ENCODE measurements at regions of chr6 and their contacts with region 1.

Region 1: DNA sequence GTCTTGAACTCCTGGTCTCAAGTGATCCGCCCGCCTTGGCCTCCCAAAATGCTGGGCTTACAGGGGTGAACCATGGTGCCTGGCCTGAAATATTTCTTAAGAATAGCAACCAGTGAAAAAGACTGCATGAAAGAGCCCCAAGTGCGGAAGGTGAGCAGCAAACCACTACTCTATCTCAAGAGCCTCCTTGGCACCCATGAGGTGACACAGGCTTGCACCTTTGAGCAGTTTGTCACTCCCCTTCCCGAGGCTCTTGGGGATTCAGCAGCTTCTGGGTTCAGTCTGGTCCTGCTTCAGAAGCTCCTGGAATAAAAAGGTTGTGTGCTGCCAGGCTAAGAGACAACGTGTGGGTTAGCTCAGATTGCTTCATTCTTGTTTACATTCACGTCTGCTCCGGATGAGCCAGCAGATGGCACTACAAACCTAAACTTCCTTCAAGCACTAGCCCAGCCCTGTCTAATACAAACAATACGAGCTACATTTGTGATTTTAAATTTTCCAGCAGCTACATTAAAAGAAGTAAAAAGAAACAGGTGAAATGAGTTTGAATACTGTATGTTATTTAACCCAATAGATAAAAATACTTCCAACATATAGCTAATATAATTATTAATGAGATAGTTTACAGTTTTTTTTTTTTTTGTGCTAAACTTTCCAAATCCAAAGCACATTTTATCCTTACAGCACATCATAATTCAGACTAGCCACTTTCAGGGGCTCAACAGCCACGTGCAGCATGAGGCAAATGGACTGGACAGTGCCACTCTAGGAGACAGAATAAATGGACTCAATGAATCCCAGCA is 46.2 kb downstream of the GJA10 start:
- DNase-seq: peak in 3 of 4 donors; percentile 55 to 88 (median 64)
- ATAC-seq: peak; percentile 95
- H3K4me3 ChIP-seq: no peak overlapping the region
- H3K27ac ChIP-seq: no peak overlapping the region
- H3K4me1 ChIP-seq: peaks cover 10% of the 10 kb centered on the region in 2 donors
- H3K27me3 ChIP-seq: no peaks in the 10 kb centered on the region
- CTCF ChIP-seq: peak; percentile 56 to 60

Region 2: GRCh38 chr6:89599727-89600126 is 340.7 kb before region 1 on chr6:
- intact Hi-C with region 1: no loop called
- DNase-seq: no peak
- ATAC-seq: no peak
- H3K4me3 ChIP-seq: no peak overlapping the region
- H3K27ac ChIP-seq: no peak overlapping the region
- H3K4me1 ChIP-seq: no peaks in the 10 kb centered on the region
- H3K27me3 ChIP-seq: no peaks in the 10 kb centered on the region
- CTCF ChIP-seq: no peak

Region 3: GRCh38 chr6:90197854-90198496 is 257.5 kb after region 1 on chr6:
- intact Hi-C with region 1: no loop called
- DNase-seq: peak in 1 of 4 donors; percentile 58
- ATAC-seq: peak; percentile 64
- H3K4me3 ChIP-seq: no peak overlapping the region
- H3K27ac ChIP-seq: no peak overlapping the region
- H3K4me1 ChIP-seq: no peaks in the 10 kb centered on the region
- H3K27me3 ChIP-seq: no peaks in the 10 kb centered on the region
- CTCF ChIP-seq: no peak

Region 4: GRCh38 chr6:90393232-90393884 is 452.9 kb after region 1 on chr6:
- intact Hi-C with region 1: loop called in 1 of 2 experiments (anchors 10 kb)
- DNase-seq: peak in 2 of 4 donors; percentile 70 to 78
- ATAC-seq: peak; percentile 94
- H3K4me3 ChIP-seq: no peak overlapping the region
- H3K27ac ChIP-seq: no peak overlapping the region
- H3K4me1 ChIP-seq: peaks cover 0 to 6% of the 10 kb centered on the region in 2 donors
- H3K27me3 ChIP-seq: no peaks in the 10 kb centered on the region
- CTCF ChIP-seq: peak; percentile 61 to 72

Region 5: DNA sequence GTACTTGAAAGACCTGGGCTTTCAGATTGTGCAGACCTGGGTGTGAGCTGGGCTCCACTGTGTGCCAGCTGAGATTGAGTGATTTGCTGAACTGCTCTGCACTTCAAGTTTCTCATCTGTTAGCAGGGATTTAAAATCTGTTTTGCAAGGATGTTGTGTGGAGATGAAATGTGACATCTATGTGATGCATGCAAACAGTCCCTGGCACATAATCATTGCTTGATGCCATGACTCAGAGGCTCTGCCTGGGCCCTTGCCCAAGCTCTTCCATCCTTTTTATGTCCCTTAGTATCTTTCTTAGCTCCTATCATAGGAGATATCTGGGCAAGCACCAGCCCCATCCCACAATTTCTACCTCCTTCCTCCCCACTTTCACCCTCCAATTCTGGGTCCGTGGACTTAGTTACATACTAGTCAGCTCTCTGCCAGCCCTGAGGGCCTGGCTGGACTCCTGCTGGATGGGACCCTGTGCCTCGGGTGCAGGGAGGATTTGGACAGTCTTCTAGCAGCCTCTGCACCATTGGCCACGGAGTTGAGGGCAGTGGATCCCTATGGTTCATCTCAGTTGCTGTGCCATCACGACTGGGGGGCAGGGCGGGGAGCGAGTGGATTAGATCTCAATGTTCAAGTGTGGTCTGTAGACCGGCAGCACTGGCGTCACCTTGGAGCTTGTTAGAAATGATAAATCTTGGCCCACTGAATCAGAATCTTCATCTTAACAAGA is 542.9 kb after region 1 on chr6:
- intact Hi-C with region 1: loop called in 1 of 2 experiments (anchors 10 kb)
- DNase-seq: no peak
- ATAC-seq: no peak
- H3K4me3 ChIP-seq: no peak overlapping the region
- H3K27ac ChIP-seq: no peak overlapping the region
- H3K4me1 ChIP-seq: peaks cover 0 to 7% of the 10 kb centered on the region in 2 donors
- H3K27me3 ChIP-seq: no peaks in the 10 kb centered on the region
- CTCF ChIP-seq: no peak